Heart left ventricle (tissue), 16 donors: ENCODE measurements at regions of chr1 and their contacts with region 1.

Region 1: GRCh38 chr1:155352631-155353030 is 31.9 kb downstream of the RUSC1 start:
- DNase-seq: no peak
- ATAC-seq: no peak
- H3K4me3 ChIP-seq: no peak overlapping the region
- H3K27ac ChIP-seq: no peak overlapping the region
- H3K4me1 ChIP-seq: no peaks in the 10 kb centered on the region
- H3K27me3 ChIP-seq: no peaks in the 10 kb centered on the region
- CTCF ChIP-seq: no peak
- POLR2A ChIP-seq: no peak

Region 2: GRCh38 chr1:155308493-155309422 is 43.9 kb before region 1 on chr1 and contains the start of gene FDPS:
- intact Hi-C with region 1: no loop called
- DNase-seq: peak; percentile 99
- ATAC-seq: peak; percentile 99 to 100 (median 100)
- H3K4me3 ChIP-seq: peak within 1 kb of the TSS; percentile 66 to 96 (median 80)
- H3K27ac ChIP-seq: peak within 1 kb of the TSS; percentile 80 to 95 (median 90)
- H3K4me1 ChIP-seq: peaks cover 4 to 34% (median 18%) of the 10 kb centered on the region in 12 donors
- H3K27me3 ChIP-seq: no peaks in the 10 kb centered on the region
- CTCF ChIP-seq: peak in 3 of 12 donors; percentile 15 to 19 (median 18)
- POLR2A ChIP-seq: peak in 1 of 2 donors; percentile 77
- total RNA-seq, gene FDPS: 63.7 to 87.9 (median 77.6) TPM

Region 3: GRCh38 chr1:155485945-155486344 is 133.3 kb after region 1 on chr1:
- intact Hi-C with region 1: loop called in 1 of 10 experiments (anchors 10 kb)
- DNase-seq: no peak
- ATAC-seq: peak in 1 of 4 donors; percentile 20
- H3K4me3 ChIP-seq: no peak overlapping the region
- H3K27ac ChIP-seq: peak overlapping the region in 1 of 12 donors; percentile 44
- H3K4me1 ChIP-seq: peaks cover 0 to 23% (median 0%) of the 10 kb centered on the region in 12 donors
- H3K27me3 ChIP-seq: no peaks in the 10 kb centered on the region
- CTCF ChIP-seq: no peak
- POLR2A ChIP-seq: no peak

Region 4: GRCh38 chr1:155678027-155678426 is 325.4 kb after region 1 on chr1:
- intact Hi-C with region 1: loop called in 1 of 10 experiments (anchors 10 kb)
- DNase-seq: no peak
- ATAC-seq: no peak
- H3K4me3 ChIP-seq: no peak overlapping the region
- H3K27ac ChIP-seq: no peak overlapping the region
- H3K4me1 ChIP-seq: peaks cover 0 to 27% (median 13%) of the 10 kb centered on the region in 12 donors
- H3K27me3 ChIP-seq: no peaks in the 10 kb centered on the region
- CTCF ChIP-seq: no peak
- POLR2A ChIP-seq: no peak